Activated naive CD8-positive, alpha-beta T cell treated with anti-CD3 and anti-CD28 coated beads, Interleukin-2, amount 10 ng/mL, durations not matched to agents 7 days and 5 days (primary cell): ENCODE measurements at regions of chr16 and their contacts with region 1.

Region 1: DNA sequence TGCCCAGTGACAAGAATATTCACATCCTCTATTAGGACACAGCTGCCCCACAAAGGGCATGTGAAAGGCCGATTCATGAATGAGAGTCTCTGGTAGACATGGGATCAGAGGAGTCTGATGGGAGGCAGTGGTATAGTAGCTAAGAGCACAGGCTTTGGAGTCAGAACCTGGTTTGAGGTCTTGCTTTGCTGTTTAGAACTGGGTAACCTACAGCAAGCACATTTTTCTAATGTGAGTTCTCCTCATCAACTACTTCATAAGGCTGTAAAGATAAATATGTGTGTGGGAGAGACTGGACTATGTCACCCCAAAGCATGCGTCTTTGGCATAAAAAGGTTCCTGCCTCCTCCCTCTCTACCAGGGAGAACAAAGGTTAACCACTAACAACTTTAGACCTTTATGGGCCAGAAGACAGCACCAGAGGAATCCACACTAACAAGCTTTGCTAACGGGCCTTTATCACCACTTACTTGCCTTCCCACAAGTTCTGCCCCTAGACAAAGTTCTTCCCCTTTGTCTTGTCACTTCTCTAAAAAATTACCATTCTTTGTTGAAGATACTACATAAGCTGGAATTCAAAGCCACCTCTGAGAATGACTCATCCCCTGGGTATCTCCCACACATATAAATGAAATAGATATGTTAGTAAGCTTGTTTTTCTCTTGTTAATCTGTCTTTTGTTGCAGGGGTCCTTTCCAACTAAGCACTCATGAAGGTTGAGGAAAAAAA is 21.1 kb downstream of the CDR2 start:
- DNase-seq: no peak
- ATAC-seq: peak; percentile 20
- H3K4me3 Mint-ChIP-seq: no peak overlapping the region
- H3K27ac Mint-ChIP-seq: peak overlapping the region; percentile 70
- H3K4me1 Mint-ChIP-seq: peaks cover 39% of the 10 kb centered on the region
- H3K27me3 Mint-ChIP-seq: no peaks in the 10 kb centered on the region

Region 2: DNA sequence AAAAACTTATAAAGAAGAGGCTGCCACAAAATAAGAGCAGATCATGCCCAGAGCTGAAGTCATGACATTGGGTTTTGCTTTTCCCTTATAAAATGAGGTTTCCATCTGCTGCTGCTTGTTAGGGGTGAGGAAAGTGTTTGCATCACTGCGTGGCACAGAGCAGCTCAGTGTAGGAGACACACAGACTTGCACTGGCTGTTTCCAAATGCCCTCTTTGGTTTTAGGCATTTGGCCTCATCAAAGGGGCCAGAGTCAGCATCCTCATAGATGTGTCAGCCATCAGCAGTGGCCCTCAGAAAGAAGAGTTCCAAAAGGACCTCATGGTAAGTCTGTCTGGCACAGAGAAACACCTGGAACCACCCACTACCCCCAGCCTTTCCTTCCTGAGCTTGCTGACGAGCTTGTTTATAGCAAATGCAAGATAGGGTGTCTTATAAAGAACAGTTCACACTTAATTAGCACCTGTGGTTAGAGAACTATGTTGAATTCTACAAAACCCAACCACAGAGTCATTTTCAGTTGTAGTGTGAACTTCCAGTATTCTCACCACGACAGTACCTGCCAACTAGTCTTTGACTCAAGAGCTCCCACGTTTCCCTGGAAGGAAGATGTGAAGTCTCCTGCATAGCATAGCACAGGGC is 244.0 kb before region 1 on chr16:
- POLR2A ChIA-PET with region 1: no interaction called
- DNase-seq: no peak
- ATAC-seq: no peak
- H3K4me3 Mint-ChIP-seq: no peak overlapping the region
- H3K27ac Mint-ChIP-seq: no peak overlapping the region
- H3K4me1 Mint-ChIP-seq: peaks cover 5% of the 10 kb centered on the region
- H3K27me3 Mint-ChIP-seq: peaks cover 7% of the 10 kb centered on the region

Region 3: GRCh38 chr16:22374311-22375116 is 21.2 kb after region 1 on chr16 and contains the start of gene CDR2:
- POLR2A ChIA-PET with region 1: interaction called, 108 read pairs
- DNase-seq: peak; percentile 97
- ATAC-seq: peak; percentile 94
- H3K4me3 Mint-ChIP-seq: peak within 1 kb of the TSS; percentile 93
- H3K27ac Mint-ChIP-seq: peak within 1 kb of the TSS; percentile 91
- H3K4me1 Mint-ChIP-seq: peaks cover 39% of the 10 kb centered on the region
- H3K27me3 Mint-ChIP-seq: peaks cover 11% of the 10 kb centered on the region
- total RNA-seq, gene CDR2: 42.2 to 48.6 TPM

Region 4: DNA sequence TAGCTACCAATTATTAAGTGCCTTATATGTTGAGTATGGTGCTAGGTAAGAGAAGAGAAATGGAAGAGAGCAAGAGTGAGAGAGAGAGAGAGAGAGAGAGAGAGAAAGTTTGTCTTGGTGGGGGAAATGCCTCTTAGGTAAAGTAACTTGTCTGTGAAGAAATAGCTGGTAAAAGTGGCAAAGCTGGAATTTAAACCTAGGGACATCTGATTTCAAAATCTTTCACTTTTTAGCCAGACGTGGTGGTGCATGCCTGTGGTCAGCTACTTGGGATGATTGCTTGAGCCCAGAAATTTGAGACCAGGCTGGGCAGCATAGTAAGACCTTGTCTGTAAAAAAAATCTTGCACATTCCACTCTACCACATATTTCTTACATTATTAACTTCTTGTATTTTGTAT is 44.1 kb after region 1 on chr16:
- POLR2A ChIA-PET with region 1: no interaction called
- DNase-seq: no peak
- ATAC-seq: no peak
- H3K4me3 Mint-ChIP-seq: no peak overlapping the region
- H3K27ac Mint-ChIP-seq: no peak overlapping the region
- H3K4me1 Mint-ChIP-seq: no peaks in the 10 kb centered on the region
- H3K27me3 Mint-ChIP-seq: no peaks in the 10 kb centered on the region